Posterior vena cava (tissue), 2 donors: ENCODE measurements at regions of chr7 and their contacts with region 1.

Region 1: DNA sequence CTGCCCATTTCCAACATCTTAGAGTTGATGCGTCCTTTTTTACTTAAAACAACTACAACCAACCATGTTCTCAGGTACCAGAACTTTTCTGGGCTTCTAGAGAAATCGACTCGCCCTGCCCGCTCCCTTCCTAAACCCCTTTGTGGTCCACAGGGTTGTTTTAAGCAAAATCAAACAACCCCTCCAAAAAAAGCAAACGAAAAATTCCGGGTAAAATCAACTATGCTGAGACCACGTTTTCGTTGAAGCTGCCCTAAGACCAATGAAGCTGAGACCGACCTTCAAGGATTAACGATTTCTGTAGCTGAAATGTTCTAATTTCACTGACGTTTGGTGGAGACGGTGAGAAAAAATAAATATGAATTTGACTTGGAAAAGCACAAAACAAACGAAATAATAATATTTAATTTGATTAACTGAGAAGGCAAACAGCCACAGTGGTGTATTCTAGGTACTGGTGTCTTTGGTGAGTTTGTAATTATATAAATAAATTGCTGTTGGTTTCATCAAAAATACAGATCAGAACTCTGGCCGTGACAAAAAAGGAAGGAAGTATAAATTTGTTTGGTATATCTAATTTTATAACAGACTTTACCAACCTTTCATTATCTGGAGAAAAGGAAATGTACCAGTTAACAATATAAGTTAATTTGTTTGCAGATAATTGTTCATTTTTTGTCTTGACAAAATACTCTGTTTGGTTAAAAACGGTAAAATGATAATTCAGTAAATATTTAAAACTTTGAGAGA is 4.7 kb upstream of the IGF2BP3 start:
- DNase-seq: no peak

Region 2: GRCh38 chr7:23531794-23532489 is 56.9 kb after region 1 on chr7 and contains the start of gene TRA2A:
- intact Hi-C with region 1: loop called in 1 of 2 experiments (anchors 2 kb)
- DNase-seq: peak; percentile 100
- total RNA-seq, gene TRA2A: 51.1 to 52.2 TPM

Region 3: GRCh38 chr7:23645822-23646221 is 170.8 kb after region 1 on chr7:
- intact Hi-C with region 1: no loop called
- DNase-seq: no peak

Region 4: GRCh38 chr7:23679898-23680413 is 205.0 kb after region 1 on chr7 and contains the start of gene FAM221A:
- intact Hi-C with region 1: loop called in 1 of 2 experiments (anchors 5 kb)
- DNase-seq: peak; percentile 97
- total RNA-seq, gene FAM221A: 2.0 to 3.7 TPM